Astrocyte of the cerebellum (primary cell): ENCODE measurements at regions of chr2 and their contacts with region 1.

Region 1: DNA sequence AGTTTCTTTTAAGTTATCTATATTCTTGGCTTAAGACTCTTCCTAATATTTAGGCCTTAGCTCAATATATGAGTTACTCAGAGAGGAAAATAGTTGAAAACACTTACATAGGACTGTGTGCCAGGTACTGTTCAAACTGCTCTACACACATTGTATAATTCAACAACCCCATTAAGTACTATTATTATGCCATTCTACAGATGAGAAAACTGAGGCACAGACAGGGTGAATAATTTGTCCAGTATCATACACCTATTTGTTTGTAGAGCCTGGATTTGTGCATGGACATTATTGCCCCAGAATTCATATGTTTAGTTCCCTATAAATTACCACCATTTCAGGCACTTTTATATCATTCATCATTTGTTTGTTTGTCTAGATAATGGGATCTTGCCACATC is 17.7 kb upstream of the GAD1 start:
- DNase-seq: no peak
- H3K4me3 ChIP-seq: no peak overlapping the region
- CTCF ChIP-seq: no peak

Region 2: DNA sequence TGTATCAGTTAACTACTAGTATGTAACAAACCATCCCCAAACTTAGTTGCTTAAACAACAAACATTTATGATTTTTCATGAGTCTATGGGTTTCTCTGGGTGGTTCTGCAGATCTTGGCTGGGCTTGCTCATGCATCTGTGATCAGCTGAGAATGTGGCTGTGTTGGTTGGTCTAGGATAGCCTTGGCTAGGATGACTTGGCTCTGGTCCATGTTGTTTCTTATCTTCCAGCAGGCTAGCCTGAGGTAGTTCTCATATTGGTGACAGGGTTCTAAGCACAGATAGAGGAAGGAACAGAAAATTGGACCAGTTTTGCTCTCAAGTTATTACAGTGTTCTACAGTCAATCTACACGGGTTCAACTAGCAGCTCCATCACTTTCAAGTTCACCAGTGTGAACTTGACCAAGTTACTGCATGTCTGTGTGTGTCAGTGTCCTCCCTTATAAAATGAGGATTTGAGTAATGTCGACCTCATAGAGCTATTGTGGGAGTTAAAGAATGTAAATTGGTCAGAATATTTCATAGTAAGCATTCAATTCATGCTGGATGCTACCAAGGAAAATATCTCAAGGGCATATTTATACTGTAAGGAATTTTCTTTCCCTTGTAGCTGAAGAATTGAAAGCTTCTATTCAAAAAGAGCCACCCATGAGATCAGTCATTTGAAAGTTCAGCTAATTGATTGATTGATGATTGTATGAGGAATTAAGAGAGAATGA is 555.7 kb before region 1 on chr2:
- in situ Hi-C with region 1: loop called (anchors 5 kb)
- DNase-seq: no peak
- H3K4me3 ChIP-seq: no peak overlapping the region
- CTCF ChIP-seq: no peak

Region 3: DNA sequence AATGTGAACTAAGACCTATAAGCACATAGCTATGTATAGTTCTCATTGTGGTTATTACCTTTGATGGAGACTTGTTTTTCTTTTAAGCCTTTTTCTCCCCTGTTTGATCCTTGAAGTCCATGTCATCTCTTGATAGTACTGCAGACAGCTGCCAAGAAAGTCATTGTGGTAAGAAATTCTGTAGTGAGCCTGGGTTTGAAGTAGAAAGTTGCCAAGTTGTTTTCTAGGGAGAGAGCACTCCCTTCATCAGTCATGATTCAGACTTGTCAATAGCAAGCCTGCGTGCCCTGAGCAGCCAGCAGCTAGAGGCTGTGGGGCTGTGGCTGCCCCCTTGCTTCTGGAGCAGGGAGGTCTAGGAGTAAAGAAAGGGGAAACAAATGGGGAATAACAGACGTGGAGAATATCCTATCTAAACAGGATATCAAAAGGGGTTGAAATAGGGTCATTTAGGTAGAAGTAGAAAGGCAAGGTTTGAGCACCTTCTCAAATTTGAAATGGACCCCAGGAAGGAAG is 75.5 kb before region 1 on chr2:
- in situ Hi-C with region 1: no loop called
- DNase-seq: no peak
- H3K4me3 ChIP-seq: no peak overlapping the region
- CTCF ChIP-seq: no peak